Esophagus muscularis mucosa (tissue), 4 donors: ENCODE measurements at regions of chr9 and their contacts with region 1.

Region 1: DNA sequence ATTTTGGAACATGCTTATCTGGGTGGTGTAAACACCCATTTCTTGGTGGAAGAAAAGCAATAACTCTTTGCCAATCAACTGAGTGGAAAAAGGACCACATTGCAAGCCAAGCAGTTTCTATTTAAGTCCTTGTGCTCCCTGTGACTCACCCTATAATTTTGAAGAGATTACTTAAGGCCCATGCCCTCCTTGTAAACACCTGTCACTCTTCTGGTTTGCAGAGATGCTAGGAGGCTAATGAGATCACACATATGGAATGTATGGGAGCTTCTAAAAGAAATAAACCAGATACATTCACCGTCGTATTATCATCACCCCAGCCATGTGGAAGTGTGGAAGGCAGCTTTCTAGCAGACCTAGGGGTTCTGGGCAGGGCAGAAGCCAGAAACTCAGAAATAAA is 337.1 kb downstream of the GADD45G start:
- DNase-seq: no peak
- H3K4me3 ChIP-seq: no peak overlapping the region
- H3K27ac ChIP-seq: peak overlapping the region; percentile 54 to 79 (median 67)
- H3K4me1 ChIP-seq: peaks cover 12 to 54% (median 51%) of the 10 kb centered on the region in 4 donors
- H3K27me3 ChIP-seq: no peaks in the 10 kb centered on the region
- CTCF ChIP-seq: no peak
- EP300 ChIP-seq: peak; percentile 36
- POLR2A ChIP-seq: no peak

Region 2: GRCh38 chr9:89999534-90000370 is 57.9 kb after region 1 on chr9:
- intact Hi-C with region 1: loop called (anchors 5 kb)
- DNase-seq: no peak
- H3K4me3 ChIP-seq: peak overlapping the region; percentile 31 to 36 (median 34)
- H3K27ac ChIP-seq: peak overlapping the region; percentile 76 to 88 (median 86)
- H3K4me1 ChIP-seq: peaks cover 49 to 68% (median 65%) of the 10 kb centered on the region in 4 donors
- H3K27me3 ChIP-seq: no peaks in the 10 kb centered on the region
- CTCF ChIP-seq: no peak
- EP300 ChIP-seq: peak; percentile 28
- POLR2A ChIP-seq: no peak